Left ventricle myocardium superior (tissue), 1 donor: ENCODE measurements at regions of chr20 and their contacts with region 1.

Region 1: DNA sequence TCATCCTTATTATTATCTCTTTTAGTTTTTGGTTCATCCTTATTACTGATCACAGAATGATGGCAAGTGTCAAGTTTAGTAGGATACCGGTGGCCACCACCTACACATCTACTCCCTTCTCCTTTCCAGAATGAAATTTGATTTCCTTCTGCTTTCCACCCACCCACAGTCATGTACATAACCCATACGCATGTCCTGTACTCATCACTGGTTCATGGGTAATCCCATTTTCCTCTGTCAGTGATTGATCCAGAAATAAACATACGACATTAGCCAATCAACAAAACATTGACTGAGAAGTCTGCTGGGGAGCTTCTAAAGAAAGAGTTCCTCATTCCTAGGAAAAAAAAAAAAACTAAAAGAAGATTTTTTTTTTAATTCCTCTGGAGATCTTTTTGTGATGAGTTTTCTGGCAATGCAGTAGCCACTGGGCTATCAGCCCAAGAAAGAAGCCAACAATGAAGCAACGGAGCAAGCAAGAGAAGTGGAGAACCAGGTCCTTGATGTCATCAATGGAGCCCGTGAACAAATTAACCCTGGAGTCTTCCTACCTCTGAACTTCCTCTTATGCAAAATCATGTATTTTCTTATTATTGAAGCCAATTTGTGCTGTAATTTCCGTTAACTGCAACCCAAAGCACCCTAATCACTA is 127.8 kb downstream of the TASP1 start:
- DNase-seq: no peak
- ATAC-seq: no peak

Region 2: GRCh38 chr20:13684566-13685222 is 173.7 kb after region 1 on chr20:
- intact Hi-C with region 1: no loop called
- DNase-seq: no peak
- ATAC-seq: no peak

Region 3: GRCh38 chr20:14451473-14451872 is 940.5 kb after region 1 on chr20:
- intact Hi-C with region 1: loop called (anchors 10 kb)
- DNase-seq: no peak
- ATAC-seq: no peak